ENCODE measurements at regions of chr5 and their contacts with region 1.

Region 1: DNA sequence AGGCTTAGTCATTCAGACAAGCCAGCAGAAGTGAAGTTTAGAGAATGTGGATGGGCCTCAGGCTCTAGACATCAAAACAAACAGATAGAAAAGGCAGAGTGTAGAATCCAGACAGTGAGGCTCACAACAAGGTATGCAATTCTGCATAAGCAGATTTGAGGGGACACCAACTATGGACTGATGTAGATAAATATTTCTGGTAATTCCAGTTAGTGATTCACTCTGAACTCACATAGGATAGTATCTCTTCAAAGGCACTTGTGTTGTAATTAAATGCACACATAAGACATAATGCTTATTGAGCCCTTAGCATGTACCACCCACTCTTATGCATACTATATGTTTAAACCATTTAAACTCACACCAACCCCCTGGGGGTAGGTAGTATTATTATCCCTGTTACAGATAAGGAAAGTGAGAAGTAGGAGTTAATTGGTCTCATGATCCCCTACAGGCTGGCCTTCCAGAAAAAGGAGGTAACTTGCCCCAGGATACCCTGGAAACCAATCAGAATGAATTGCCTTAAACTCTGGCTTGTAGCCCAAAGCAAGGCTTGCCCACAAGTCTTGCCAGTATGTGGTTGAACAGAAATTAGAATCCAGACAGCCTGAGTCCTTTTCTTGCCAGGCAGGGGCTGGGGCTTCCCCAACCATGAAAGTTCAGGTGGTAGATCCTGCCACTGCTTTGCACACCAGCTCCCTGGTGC is 39.5 kb upstream of the HSPB3 start:
- DNase-seq: no peak
- H3K4me3 ChIP-seq: no peak overlapping the region
- H3K27ac ChIP-seq: no peak overlapping the region
- H3K4me1 ChIP-seq: no peaks in the 10 kb centered on the region
- H3K27me3 ChIP-seq: no peaks in the 10 kb centered on the region
- CTCF ChIP-seq: no peak
- POLR2A ChIP-seq: no peak

Region 2: GRCh38 chr5:54243473-54244080 is 172.5 kb before region 1 on chr5:
- intact Hi-C with region 1: loop called in 1 of 2 experiments (anchors 10 kb)
- DNase-seq: peak in 6 of 7 donors; percentile 25 to 72 (median 42)
- H3K4me3 ChIP-seq: no peak overlapping the region
- H3K27ac ChIP-seq: no peak overlapping the region
- H3K4me1 ChIP-seq: peaks cover 0 to under 1% of the 10 kb centered on the region in 2 donors
- H3K27me3 ChIP-seq: no peaks in the 10 kb centered on the region
- CTCF ChIP-seq: peak; percentile 47 to 81 (median 71)
- POLR2A ChIP-seq: no peak

Region 3: DNA sequence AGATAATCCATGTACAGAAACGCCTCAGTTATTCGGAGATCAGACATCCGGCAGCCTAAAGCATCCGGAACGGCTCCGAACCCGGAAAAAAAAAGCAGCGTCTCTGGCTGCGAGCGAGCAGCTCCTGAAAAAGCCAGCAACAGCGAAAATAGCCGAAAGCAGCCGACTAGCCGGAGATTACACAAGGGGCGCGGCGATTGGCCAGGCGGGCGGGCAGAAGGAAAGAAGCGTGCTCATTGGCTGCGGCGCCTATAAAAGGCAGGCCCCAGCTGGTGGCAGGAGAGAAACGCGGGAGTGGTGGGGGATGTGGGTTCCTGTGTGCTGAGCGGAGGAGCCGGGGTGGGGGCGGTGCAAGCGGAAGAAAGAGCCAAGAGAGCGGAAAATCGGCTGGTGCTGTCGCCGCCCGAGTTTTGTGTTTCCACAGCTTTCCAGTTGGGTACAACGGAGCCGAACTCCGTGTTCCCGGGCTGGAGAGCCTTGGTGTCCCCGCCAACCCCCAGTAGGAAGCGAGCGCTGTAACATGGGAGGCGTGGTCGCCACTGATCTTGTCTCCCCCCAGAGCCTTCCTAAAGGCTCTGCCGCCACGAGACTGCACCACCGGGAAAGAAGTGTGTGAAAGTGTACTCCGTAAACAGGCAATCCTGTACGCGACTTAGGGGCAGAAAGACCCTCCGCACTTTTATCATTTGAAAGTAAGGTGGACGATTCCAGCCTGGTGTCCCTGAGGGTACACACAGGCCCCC is 105.4 kb before region 1 on chr5 and contains the start of gene ARL15:
- intact Hi-C with region 1: loop called (anchors 10 kb)
- DNase-seq: peak; percentile 98 to 100 (median 99)
- H3K4me3 ChIP-seq: peak within 1 kb of the TSS; percentile 43 to 97 (median 86)
- H3K27ac ChIP-seq: peak within 1 kb of the TSS in 4 of 5 donors; percentile 81 to 90 (median 86)
- H3K4me1 ChIP-seq: peaks cover 12 to 21% of the 10 kb centered on the region in 2 donors
- H3K27me3 ChIP-seq: no peaks in the 10 kb centered on the region
- CTCF ChIP-seq: no peak
- POLR2A ChIP-seq: peak; percentile 99 to 100
- total RNA-seq, gene ARL15: 19.4 to 85.6 (median 42.8) TPM